ENCODE measurements at regions of chr9 and their contacts with region 1.

Region 1: GRCh38 chr9:81499021-81499454 is 190.3 kb downstream of the TLE1 start:
- DNase-seq: peak; percentile 14 to 18
- ATAC-seq: peak; percentile 72 to 84
- H3K4me3 ChIP-seq: no peak overlapping the region
- H3K27ac ChIP-seq: peak overlapping the region; percentile 56 to 72 (median 68)
- H3K4me1 ChIP-seq: peaks cover 18 to 21% of the 10 kb centered on the region in 2 donors
- H3K27me3 ChIP-seq: no peaks in the 10 kb centered on the region
- CTCF ChIP-seq: no peak
- POLR2A ChIP-seq: no peak

Region 2: DNA sequence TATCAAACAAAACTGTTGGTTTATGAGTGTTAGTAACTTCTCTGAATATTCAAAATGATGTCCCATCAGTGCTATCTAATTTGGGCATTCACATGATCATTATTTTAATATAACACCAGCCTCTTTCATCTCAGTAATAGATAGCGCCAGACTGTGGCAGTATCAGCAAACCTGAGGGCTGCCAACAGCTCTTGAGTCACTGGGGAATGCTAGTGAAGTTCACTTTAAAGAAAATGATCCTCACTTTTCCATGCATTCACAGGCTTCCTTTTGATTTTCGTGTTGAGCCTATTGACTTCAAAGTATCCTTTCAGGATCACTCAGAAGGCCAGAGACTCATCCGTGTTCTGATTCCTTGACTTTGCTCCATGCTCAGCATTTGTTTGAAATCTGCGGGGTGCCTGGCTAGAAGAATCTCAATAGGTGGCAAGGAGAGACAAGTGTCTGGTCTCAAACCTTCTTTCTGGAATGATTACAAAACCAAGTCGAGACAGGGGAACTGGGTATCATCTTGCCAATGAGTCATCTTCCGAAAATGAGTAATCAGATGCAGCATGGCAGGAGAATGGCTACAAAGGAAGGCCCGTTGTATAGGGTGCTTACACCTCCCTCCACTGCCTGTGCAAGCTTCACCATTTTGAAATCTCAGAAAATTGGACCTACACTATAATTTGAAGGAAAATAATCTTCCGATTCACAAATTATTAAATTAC is 1054.8 kb after region 1 on chr9:
- in situ Hi-C with region 1: no loop called
- intact Hi-C with region 1: loop called (anchors 5 kb)
- DNase-seq: no peak
- ATAC-seq: no peak
- H3K4me3 ChIP-seq: no peak overlapping the region
- H3K27ac ChIP-seq: no peak overlapping the region
- H3K4me1 ChIP-seq: peaks cover 0 to 4% of the 10 kb centered on the region in 2 donors
- H3K27me3 ChIP-seq: no peaks in the 10 kb centered on the region
- CTCF ChIP-seq: no peak
- POLR2A ChIP-seq: no peak